Cardiac septum (tissue), 1 donor: ENCODE measurements at regions of chr3 and their contacts with region 1.

Region 1: GRCh38 chr3:196524527-196524926 is 9.4 kb upstream of the SMCO1 start:
- DNase-seq: no peak

Region 2: DNA sequence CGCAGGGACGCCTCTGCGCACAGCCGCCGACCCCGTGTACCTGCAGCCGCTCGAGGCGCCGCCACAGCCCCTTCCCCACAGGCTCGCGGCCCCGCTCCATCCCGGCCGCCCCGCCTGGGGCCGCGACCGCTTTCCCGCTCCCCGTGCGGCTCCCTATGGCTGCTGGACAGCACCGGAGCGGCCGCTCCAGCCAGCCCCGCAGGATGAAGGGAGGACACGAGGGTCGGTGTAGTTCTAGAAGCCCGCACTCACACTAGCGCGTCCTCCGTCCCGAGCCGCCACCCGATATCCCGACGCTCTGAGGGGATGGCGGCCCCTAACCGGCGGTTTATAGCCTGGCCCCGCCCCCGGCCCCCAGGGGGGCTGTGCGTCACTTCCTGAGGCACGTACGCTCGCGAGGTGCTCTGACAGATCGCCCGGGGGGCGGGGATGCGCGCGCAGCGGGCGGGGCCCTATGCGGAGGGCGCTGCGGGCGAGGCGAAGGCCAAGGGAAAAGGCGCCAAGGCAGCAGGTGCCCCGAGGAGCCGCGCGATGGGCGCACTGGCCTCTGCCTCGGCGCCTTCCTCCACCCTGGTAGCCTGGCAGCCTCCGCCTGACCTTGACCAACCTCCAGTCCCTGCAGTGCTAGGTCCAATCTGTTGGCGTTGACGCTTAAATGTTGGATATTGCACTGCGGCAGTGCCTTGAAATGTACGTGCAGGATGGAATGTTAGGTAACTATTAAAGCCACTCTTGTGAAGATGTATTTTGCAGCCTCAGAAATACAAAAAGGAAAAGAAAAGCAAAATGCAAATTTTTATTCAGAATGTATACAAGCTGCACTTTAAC is 442.5 kb before region 1 on chr3 and contains the start of gene TFRC:
- intact Hi-C with region 1: loop called (anchors 5 kb)
- DNase-seq: peak; percentile 97
- total RNA-seq, gene TFRC: 131 TPM